ENCODE measurements at regions of chr17 and their contacts with region 1.

Region 1: DNA sequence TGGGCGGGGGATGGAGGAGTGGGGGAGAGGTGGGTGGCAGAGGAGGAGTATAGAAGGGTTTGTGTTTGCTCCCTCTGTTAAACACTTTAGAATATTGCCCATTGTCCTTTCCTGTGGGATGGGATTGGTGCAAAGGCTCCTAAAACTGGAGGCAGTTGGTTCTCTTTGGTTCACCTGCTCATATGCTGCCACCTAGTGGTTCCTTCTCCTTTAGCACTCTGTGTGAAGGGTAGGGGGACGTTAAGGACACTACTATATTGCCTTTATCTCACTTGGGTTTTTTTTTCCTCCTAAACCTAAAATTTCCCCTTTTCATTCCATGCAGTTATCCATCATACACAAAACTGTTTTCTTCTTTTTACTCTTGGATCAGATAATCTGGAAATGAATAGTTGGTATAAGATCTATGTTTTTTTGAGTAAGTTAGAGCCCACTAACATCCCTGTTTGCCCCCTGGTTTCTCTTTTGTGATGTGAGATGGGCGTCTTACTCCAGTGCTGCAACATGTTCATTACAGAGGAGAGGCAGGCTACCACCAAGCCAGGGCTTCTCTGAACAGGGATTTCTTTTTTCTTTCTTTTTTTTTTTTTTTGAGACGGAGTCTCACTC is 23.8 kb downstream of the SNX11 start:
- DNase-seq: peak in 8 of 9 donors; percentile 21 to 64 (median 56)
- ATAC-seq: peak; percentile 91
- H3K4me3 ChIP-seq: no peak overlapping the region
- H3K4me3 Mint-ChIP-seq: no peak overlapping the region
- H3K27ac ChIP-seq: no peak overlapping the region
- H3K27ac Mint-ChIP-seq: peak overlapping the region in 5 of 9 donors; percentile 75 to 79 (median 78)
- H3K4me1 ChIP-seq: no peaks in the 10 kb centered on the region
- H3K4me1 Mint-ChIP-seq: peaks cover 0 to 4% (median 0%) of the 10 kb centered on the region in 7 donors
- H3K27me3 ChIP-seq: no peaks in the 10 kb centered on the region
- H3K27me3 Mint-ChIP-seq: no peaks in the 10 kb centered on the region

Region 2: GRCh38 chr17:47978324-47978723 is 153.0 kb before region 1 on chr17:
- CTCF ChIA-PET with region 1: no interaction called
- POLR2A ChIA-PET with region 1: no interaction called
- intact Hi-C with region 1: loop called in 1 of 2 experiments (anchors 5 kb)
- DNase-seq: peak in 7 of 9 donors; percentile 18 to 52 (median 35)
- ATAC-seq: peak; percentile 78
- H3K4me3 ChIP-seq: no peak overlapping the region
- H3K4me3 Mint-ChIP-seq: no peak overlapping the region
- H3K27ac ChIP-seq: no peak overlapping the region
- H3K27ac Mint-ChIP-seq: no peak overlapping the region
- H3K4me1 ChIP-seq: peaks cover 0 to 5% of the 10 kb centered on the region in 2 donors
- H3K4me1 Mint-ChIP-seq: peaks cover 0 to 12% (median 4%) of the 10 kb centered on the region in 7 donors
- H3K27me3 ChIP-seq: no peaks in the 10 kb centered on the region
- H3K27me3 Mint-ChIP-seq: no peaks in the 10 kb centered on the region

Region 3: DNA sequence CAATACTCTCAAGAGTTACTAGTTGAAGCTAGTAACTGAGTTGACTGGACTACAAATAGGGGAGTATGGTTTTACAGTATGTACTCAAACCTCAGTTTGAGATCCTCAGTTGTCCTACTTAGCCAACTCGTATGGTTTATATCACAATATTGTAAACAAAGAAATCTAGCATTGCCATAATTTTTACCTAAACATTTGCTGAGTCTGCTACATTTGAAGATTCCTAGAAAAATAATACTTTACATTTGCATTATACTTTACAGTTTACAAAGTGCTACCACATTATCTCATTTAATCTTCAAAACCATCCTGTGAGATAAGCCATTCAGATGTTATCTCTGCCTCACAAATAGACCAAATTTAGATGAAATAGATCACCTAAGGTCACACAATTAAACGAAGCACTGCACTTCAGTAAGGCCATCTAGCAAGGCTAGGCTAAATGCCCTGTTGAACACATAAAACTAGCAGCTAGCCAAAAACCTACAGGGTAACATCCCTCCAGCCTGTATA is 46.3 kb before region 1 on chr17:
- CTCF ChIA-PET with region 1: interaction called, 64 read pairs
- POLR2A ChIA-PET with region 1: interaction called, 6 read pairs
- intact Hi-C with region 1: loop called (anchors 1 kb)
- DNase-seq: no peak
- ATAC-seq: no peak
- H3K4me3 ChIP-seq: no peak overlapping the region
- H3K4me3 Mint-ChIP-seq: no peak overlapping the region
- H3K27ac ChIP-seq: no peak overlapping the region
- H3K27ac Mint-ChIP-seq: no peak overlapping the region
- H3K4me1 ChIP-seq: no peaks in the 10 kb centered on the region
- H3K4me1 Mint-ChIP-seq: peaks cover 0 to 20% (median 10%) of the 10 kb centered on the region in 7 donors
- H3K27me3 ChIP-seq: no peaks in the 10 kb centered on the region
- H3K27me3 Mint-ChIP-seq: no peaks in the 10 kb centered on the region

Measured in naive thymus-derived CD4-positive, alpha-beta T cell (primary cell).